GM12878 (cell line): ENCODE measurements at regions of chr6 and their contacts with region 1.

Region 1: DNA sequence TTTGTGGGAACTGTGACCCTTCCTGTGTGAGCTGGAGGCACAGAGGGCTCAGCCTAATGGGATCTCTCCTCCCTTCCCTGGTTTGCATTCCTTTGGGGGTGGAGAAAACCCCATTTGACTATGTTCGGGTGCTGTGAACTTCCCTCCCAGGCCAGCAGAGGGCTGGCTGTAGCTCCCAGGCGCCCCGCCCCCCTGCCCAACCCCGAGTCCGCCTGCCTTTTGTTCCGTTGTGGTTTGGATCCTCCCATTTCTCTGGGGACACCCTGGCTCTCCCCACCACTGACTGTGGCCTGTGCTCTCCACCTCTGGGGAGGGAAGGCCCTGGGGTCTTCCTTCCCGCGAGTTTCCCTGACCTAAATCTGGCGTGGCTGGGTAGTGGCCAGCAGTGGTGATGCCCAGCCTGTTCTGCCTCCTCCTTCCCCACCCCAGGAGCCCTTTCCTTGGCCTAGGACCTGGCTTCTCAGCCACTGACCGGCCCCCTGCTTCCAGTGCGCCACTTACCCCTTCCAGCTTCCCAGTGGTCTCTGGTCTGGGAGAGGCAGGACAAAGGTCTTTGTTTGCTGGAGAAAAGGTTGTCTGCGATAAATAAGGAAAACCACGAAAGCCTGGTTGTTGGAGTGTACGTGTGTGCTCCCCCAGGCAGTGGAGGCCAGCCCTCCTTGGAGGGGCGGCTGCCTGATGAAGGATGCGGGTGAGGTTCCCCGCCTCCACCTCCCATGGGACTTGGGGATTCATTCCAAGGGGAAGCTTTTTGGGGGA is 4.9 kb downstream of the VEGFA start:
- DNase-seq: no peak
- ATAC-seq: peak; percentile 22
- H3K4me3 ChIP-seq: peak overlapping the region; percentile 98
- H3K27ac ChIP-seq: no peak overlapping the region
- H3K4me1 ChIP-seq: peaks cover 22% of the 10 kb centered on the region
- H3K27me3 ChIP-seq: no peaks in the 10 kb centered on the region
- CTCF ChIP-seq: peak; percentile 81 to 96 (median 87)
- EP300 ChIP-seq: no peak
- POLR2A ChIP-seq: no peak
- RAD21 ChIP-seq: peak; percentile 53

Region 2: DNA sequence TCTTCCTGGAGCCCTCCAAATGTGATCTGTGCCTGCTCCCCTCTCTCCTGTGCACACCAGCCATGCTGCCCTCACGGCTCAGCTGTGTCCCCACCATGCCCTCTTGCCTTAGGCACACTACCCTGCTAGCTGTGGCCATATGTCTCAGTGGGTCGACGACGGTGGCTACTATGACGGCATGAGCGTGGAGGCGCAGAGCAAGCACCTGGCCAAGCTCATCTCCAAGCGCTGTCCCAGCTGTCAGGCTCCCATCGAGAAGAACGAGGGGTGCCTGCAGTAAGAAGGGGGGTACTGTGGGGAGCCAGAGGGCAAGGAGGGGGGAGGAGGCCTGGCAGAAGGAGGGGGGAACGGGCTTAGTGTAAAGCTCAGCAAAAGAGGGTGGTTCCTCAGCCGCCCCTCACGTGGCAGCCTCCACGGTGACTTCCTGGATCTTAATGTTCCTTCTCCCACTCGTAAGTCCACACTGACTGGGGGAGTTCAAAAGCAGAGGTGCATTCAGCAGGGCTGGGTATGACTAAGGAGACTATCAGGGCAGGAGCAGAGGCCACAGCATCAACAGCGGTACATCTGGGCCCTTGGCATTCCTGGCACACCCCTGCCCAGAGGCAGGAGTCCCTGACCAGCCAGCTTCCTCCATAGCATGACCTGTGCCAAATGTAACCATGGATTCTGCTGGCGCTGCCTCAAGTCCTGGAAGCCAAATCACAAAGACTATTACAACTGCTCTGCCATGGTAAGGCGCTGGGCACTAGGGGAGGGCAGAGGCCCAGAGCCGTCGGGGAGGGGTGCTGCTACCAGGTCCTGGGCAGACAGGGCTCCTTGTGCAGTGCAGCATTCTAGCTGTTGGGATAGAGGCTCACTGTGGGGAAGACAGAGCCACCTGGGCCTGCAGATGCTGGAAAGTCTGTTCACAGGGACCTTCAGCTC is 553.6 kb before region 1 on chr6:
- CTCF ChIA-PET with region 1: no interaction called
- POLR2A ChIA-PET with region 1: no interaction called
- RAD21 ChIA-PET with region 1: no interaction called
- SMC1A ChIA-PET with region 1: no interaction called
- in situ Hi-C with region 1: no loop called
- intact Hi-C with region 1: no loop called
- DNase-seq: no peak
- ATAC-seq: no peak
- H3K4me3 ChIP-seq: no peak overlapping the region
- H3K27ac ChIP-seq: no peak overlapping the region
- H3K4me1 ChIP-seq: peaks cover 19% of the 10 kb centered on the region
- H3K27me3 ChIP-seq: no peaks in the 10 kb centered on the region
- CTCF ChIP-seq: no peak
- EP300 ChIP-seq: no peak
- POLR2A ChIP-seq: no peak
- RAD21 ChIP-seq: no peak

Region 3: DNA sequence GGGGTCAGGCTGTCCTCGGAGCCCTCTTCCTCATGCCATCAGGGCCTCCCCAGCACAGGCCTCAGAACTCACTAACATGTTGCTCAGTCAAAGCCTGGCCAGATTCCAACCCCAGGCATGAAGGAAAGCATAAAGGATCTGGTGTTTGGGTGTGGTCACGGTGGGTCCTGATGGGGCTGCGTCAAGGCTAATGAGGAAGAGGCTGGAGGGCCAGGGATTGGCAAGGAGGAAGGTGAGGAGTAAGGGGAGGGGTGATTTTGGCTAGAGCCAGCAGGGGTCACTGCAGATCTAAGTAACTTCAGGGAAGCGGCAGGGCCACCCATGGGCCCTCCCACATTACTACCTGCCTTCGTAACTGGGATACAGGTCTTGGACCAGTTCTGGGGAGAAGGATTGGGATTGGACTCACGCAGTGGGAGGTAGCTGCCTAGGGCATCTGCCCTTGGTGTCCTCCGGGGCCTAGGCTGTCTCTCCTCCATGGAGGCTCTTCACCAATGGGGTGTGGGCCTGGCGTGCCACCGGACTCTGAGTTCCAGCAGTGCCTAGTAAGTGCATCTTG is 51.1 kb before region 1 on chr6:
- CTCF ChIA-PET with region 1: interaction called, 39 read pairs
- POLR2A ChIA-PET with region 1: interaction called, 13 read pairs
- RAD21 ChIA-PET with region 1: interaction called, 23 read pairs
- SMC1A ChIA-PET with region 1: interaction called, 31 read pairs
- in situ Hi-C with region 1: no loop called
- intact Hi-C with region 1: no loop called
- DNase-seq: no peak
- ATAC-seq: peak; percentile 88
- H3K4me3 ChIP-seq: no peak overlapping the region
- H3K27ac ChIP-seq: no peak overlapping the region
- H3K4me1 ChIP-seq: peaks cover 24% of the 10 kb centered on the region
- H3K27me3 ChIP-seq: no peaks in the 10 kb centered on the region
- CTCF ChIP-seq: peak; percentile 76 to 93 (median 81)
- EP300 ChIP-seq: no peak
- POLR2A ChIP-seq: no peak
- RAD21 ChIP-seq: peak; percentile 82

Region 4: DNA sequence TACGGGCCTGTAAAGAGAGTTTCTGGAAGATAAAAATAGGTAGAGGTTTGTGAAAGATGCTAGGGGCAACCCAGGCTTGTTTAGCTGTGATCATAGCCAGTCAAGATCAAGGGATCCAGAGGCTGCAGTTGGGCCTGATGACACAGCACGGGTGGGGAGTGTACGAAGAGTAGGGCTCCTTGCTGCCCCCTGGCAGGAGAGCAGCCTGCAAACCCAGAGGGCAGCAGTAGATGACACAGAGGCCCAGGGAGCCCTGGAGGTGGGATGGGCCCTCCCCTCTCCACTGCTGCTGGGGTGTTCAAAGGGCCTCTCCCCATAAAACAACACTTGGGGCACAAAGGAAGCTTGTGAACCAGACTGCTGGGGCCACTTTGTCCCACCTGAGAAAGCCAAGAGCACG is 42.2 kb after region 1 on chr6:
- CTCF ChIA-PET with region 1: interaction called, 52 read pairs
- POLR2A ChIA-PET with region 1: interaction called, 7 read pairs
- RAD21 ChIA-PET with region 1: interaction called, 13 read pairs
- SMC1A ChIA-PET with region 1: interaction called, 9 read pairs
- in situ Hi-C with region 1: no loop called
- intact Hi-C with region 1: no loop called
- DNase-seq: no peak
- ATAC-seq: peak; percentile 97
- H3K4me3 ChIP-seq: no peak overlapping the region
- H3K27ac ChIP-seq: no peak overlapping the region
- H3K4me1 ChIP-seq: no peaks in the 10 kb centered on the region
- H3K27me3 ChIP-seq: no peaks in the 10 kb centered on the region
- CTCF ChIP-seq: peak; percentile 21 to 55 (median 50); a peak in 3 of 6 replicates
- EP300 ChIP-seq: no peak
- POLR2A ChIP-seq: no peak
- RAD21 ChIP-seq: no peak

Region 5: GRCh38 chr6:43833223-43833995 is 58.5 kb after region 1 on chr6:
- CTCF ChIA-PET with region 1: interaction called, 22 read pairs
- POLR2A ChIA-PET with region 1: interaction called, 4 read pairs
- RAD21 ChIA-PET with region 1: interaction called, 14 read pairs
- SMC1A ChIA-PET with region 1: interaction called, 14 read pairs
- in situ Hi-C with region 1: no loop called
- intact Hi-C with region 1: no loop called
- DNase-seq: no peak
- ATAC-seq: peak; percentile 28
- H3K4me3 ChIP-seq: no peak overlapping the region
- H3K27ac ChIP-seq: no peak overlapping the region
- H3K4me1 ChIP-seq: no peaks in the 10 kb centered on the region
- H3K27me3 ChIP-seq: peaks cover 0 to 3% of the 10 kb centered on the region in 2 experiments; a peak in 3 of 4 replicates
- CTCF ChIP-seq: no peak
- EP300 ChIP-seq: no peak
- POLR2A ChIP-seq: no peak
- RAD21 ChIP-seq: no peak

Region 6: GRCh38 chr6:43951063-43951755 is 176.3 kb after region 1 on chr6:
- CTCF ChIA-PET with region 1: interaction called, 26 read pairs
- POLR2A ChIA-PET with region 1: interaction called, 4 read pairs
- RAD21 ChIA-PET with region 1: interaction called, 11 read pairs
- SMC1A ChIA-PET with region 1: interaction called, 8 read pairs
- in situ Hi-C with region 1: no loop called
- intact Hi-C with region 1: loop called (anchors 5 kb)
- DNase-seq: no peak
- ATAC-seq: peak; percentile 88
- H3K4me3 ChIP-seq: no peak overlapping the region
- H3K27ac ChIP-seq: no peak overlapping the region
- H3K4me1 ChIP-seq: no peaks in the 10 kb centered on the region
- H3K27me3 ChIP-seq: no peaks in the 10 kb centered on the region
- CTCF ChIP-seq: peak; percentile 36 to 51 (median 41); a peak in 4 of 6 replicates
- EP300 ChIP-seq: no peak
- POLR2A ChIP-seq: no peak
- RAD21 ChIP-seq: peak; percentile 42; the same call in 1 of the 2 replicates

Region 7: DNA sequence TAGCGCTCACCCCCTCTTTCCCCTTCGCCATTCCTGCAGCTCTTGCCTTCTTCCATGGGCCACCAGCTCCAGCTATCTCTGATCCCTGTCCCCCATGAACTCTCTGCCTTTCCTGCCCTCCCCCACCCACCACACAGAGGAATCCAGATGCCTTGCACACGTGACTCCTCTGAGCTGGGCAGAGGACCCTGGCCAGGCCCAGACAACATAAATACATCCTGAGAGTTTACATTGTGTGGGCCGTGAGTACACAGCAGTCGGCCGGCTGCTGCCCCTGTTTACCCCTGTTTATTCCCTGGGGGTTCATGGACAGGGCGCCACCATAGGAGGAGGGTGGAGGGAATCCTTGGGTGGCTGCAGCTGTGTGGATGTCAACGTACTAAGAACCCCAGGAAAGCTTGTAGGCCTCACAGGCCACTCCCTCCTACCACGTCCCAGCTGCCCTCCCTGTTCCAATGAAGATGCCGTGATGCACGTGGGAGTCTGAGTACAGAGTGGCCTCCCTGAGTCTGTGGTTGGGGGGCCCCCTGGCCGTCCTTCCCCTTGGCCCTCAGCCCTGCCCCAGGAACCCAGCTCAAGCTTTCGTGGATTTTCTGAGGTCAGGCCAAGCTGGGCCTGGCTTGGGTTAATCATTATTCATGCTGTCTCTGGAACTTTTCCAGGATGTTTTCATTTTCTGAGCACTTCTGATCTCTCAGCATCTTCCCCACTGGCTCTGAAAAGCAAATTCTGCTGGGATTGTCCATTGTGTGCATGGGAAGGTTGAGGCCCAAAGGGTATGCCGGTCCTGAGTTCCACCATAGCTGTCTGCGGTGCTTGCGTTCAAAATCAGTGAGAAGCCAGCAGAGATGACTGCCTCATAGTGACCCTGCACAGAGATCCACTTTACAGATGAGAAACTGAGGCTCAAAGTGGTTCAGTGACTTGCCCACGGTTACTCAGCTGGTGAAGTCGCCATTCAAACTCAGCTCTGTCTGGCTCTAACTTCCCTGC is 216.0 kb after region 1 on chr6:
- CTCF ChIA-PET with region 1: interaction called, 12 read pairs
- POLR2A ChIA-PET with region 1: interaction called, 5 read pairs
- RAD21 ChIA-PET with region 1: interaction called, 5 read pairs
- SMC1A ChIA-PET with region 1: interaction called, 5 read pairs
- in situ Hi-C with region 1: no loop called
- intact Hi-C with region 1: no loop called
- DNase-seq: no peak
- ATAC-seq: no peak
- H3K4me3 ChIP-seq: no peak overlapping the region
- H3K27ac ChIP-seq: no peak overlapping the region
- H3K4me1 ChIP-seq: peaks cover 10% of the 10 kb centered on the region
- H3K27me3 ChIP-seq: no peaks in the 10 kb centered on the region
- CTCF ChIP-seq: no peak
- EP300 ChIP-seq: no peak
- POLR2A ChIP-seq: no peak
- RAD21 ChIP-seq: no peak

Region 8: DNA sequence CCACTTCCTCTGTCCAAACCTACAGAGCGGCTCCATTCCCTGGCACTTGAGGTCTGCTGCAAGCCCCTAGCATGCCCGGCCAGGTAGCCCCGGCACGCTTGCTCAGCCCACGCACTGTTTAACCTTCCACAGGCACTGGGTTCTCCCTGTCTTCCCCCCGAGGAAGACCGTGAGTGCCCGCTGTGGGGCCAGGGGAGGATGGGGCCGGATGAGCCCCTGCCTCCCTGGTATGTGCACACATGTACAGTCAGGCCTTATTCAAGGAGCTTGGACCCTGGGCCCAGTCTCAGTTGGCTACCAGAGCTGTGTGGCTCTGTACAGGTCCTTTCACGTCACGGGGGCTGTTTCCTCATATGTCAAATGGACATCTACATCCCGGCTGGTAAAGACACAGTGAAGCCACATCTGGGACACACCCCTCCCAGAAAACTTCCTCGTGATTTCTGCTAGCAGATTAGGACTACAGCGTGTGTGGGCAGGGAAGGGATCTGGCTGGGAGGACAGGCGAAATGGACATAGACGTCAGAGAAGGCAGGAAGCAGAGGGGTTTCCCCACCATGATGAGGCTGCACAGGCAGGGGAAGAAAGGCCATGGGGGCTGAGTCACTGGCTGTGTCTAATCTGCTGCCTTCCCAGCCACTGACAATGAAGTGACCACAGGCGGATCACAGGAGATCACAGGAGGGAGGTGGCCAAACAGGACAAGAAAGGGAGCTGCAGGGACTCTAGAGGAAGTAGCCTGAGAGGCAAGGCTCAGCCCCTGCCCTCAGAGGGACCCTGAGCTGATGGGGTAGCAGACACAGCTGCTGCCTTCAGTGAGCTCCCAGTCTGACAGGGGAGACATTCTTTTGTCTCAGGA is 289.4 kb after region 1 on chr6:
- CTCF ChIA-PET with region 1: interaction called, 14 read pairs
- POLR2A ChIA-PET with region 1: interaction called, 3 read pairs
- RAD21 ChIA-PET with region 1: interaction called, 5 read pairs
- SMC1A ChIA-PET with region 1: interaction called, 4 read pairs
- in situ Hi-C with region 1: no loop called
- intact Hi-C with region 1: no loop called
- DNase-seq: no peak
- ATAC-seq: peak; percentile 77
- H3K4me3 ChIP-seq: no peak overlapping the region
- H3K27ac ChIP-seq: no peak overlapping the region
- H3K4me1 ChIP-seq: peaks cover 44% of the 10 kb centered on the region
- H3K27me3 ChIP-seq: no peaks in the 10 kb centered on the region
- CTCF ChIP-seq: no peak
- EP300 ChIP-seq: no peak
- POLR2A ChIP-seq: no peak
- RAD21 ChIP-seq: no peak